Naive thymus-derived CD4-positive, alpha-beta T cell (primary cell): ENCODE measurements at regions of chr1 and their contacts with region 1.

Region 1: GRCh38 chr1:228165372-228166169 is at the start of gene IBA57:
- DNase-seq: peak; percentile 99 to 100 (median 100)
- ATAC-seq: peak; percentile 89
- H3K4me3 ChIP-seq: peak within 1 kb of the TSS; percentile 79
- H3K4me3 Mint-ChIP-seq: peak within 1 kb of the TSS; percentile 76 to 92 (median 88)
- H3K27ac ChIP-seq: peak within 1 kb of the TSS; percentile 97
- H3K27ac Mint-ChIP-seq: peak within 1 kb of the TSS; percentile 87 to 98 (median 98)
- H3K4me1 ChIP-seq: peaks cover 14 to 39% of the 10 kb centered on the region in 2 donors
- H3K4me1 Mint-ChIP-seq: peaks cover 10 to 65% (median 48%) of the 10 kb centered on the region in 7 donors
- H3K27me3 ChIP-seq: no peaks in the 10 kb centered on the region
- H3K27me3 Mint-ChIP-seq: no peaks in the 10 kb centered on the region
- total RNA-seq, gene IBA57: 9.3 to 17.1 (median 10.9) TPM

Region 2: GRCh38 chr1:227999056-227999930 is 166.3 kb before region 1 on chr1:
- CTCF ChIA-PET with region 1: no interaction called
- POLR2A ChIA-PET with region 1: no interaction called
- intact Hi-C with region 1: loop called in 1 of 2 experiments (anchors 1 kb)
- DNase-seq: peak; percentile 42 to 74 (median 60)
- ATAC-seq: peak; percentile 93
- H3K4me3 ChIP-seq: no peak overlapping the region
- H3K4me3 Mint-ChIP-seq: no peak overlapping the region
- H3K27ac ChIP-seq: no peak overlapping the region
- H3K27ac Mint-ChIP-seq: no peak overlapping the region
- H3K4me1 ChIP-seq: no peaks in the 10 kb centered on the region
- H3K4me1 Mint-ChIP-seq: no peaks in the 10 kb centered on the region
- H3K27me3 ChIP-seq: peaks cover under 1 to 5% of the 10 kb centered on the region in 2 donors
- H3K27me3 Mint-ChIP-seq: peaks cover 9 to 44% (median 25%) of the 10 kb centered on the region in 5 donors

Region 3: DNA sequence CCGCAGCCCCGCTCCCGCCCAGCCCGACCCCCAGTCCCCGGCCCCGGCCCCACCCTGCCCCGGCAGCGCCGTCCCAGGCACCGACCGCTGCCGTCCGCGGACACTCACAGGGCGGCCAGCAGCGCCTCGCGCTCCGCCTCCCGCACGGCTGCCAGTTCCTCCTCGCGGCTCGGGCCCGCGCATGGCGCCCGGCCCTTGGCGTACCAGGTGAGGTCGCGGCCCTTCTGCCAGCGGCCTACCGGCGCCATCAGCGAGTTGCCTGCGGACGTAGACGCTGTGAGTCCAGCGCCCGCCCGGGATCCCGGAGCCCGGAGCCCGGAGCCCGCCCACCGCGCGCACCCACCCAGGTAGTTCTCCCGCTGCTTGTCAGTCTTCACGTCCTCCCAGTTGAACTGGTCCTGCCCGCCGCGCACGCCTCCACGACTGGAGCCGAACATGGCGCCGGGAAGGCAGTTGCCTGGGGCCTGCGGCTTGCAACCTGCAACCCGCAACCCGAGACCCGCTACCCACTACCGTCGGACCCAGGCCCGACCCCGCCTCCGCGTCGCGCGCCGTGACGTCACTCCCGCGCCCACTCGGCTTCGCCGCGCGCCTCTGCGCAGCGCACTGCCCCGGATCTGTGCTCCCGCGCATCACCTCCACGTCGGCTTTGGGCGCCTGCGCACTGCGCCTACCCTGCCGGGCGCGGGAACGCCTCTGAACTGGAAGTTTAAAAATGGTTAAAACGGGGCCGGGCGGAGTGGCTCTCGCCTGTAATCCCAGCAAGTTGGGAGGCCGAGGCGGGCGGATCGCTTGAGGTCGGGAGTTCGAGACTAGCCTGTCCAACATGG is 62.6 kb before region 1 on chr1 and contains the start of gene C1orf35:
- CTCF ChIA-PET with region 1: interaction called, 3 read pairs
- POLR2A ChIA-PET with region 1: interaction called, 10 read pairs
- intact Hi-C with region 1: loop called (anchors 1 kb)
- DNase-seq: peak; percentile 90 to 97 (median 93)
- ATAC-seq: peak; percentile 85
- H3K4me3 ChIP-seq: peak within 1 kb of the TSS; percentile 95
- H3K4me3 Mint-ChIP-seq: peak within 1 kb of the TSS; percentile 91 to 97 (median 93)
- H3K27ac ChIP-seq: peak within 1 kb of the TSS; percentile 94
- H3K27ac Mint-ChIP-seq: peak within 1 kb of the TSS; percentile 90 to 95 (median 94)
- H3K4me1 ChIP-seq: peaks cover 17 to 20% of the 10 kb centered on the region in 2 donors
- H3K4me1 Mint-ChIP-seq: peaks cover 6 to 43% (median 23%) of the 10 kb centered on the region in 7 donors
- H3K27me3 ChIP-seq: no peaks in the 10 kb centered on the region
- H3K27me3 Mint-ChIP-seq: no peaks in the 10 kb centered on the region
- total RNA-seq, gene C1orf35: 16.8 to 31.8 (median 27.8) TPM

Region 4: DNA sequence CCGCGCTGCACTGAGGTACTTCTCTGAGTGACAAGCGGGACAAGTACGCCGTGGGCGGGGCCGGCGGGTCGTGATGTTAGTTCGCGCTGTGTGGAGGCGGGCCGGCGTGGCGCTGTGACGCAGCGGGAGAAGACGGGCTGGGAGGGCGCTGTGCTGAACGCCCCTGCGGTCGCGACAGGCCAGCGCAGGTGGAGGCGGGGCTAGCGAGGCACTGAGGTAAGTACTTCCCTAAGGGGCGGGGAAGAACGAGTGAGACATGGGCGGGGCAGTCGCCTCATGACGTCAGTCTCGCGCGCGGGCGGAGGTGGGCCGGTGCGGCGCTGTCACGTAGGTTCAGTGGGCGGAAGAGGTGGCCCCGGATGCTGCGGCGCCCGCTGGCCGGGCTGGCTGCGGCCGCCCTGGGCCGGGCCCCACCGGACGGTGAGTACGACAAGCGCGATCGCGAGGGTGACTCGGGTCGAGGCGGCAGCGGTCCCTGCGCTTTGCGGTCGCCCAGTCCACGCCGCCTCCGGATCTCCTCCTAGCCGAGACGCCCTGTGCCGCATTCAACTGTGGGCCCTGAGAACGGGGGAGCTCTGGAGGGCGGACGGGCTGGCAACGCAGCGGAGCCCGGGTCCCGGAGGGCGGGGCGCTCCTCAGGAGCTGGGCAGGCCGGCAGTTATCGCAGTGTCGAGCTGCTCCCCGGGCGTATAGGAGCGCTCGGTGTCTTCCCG is 25.5 kb before region 1 on chr1 and contains the start of gene GUK1:
- CTCF ChIA-PET with region 1: interaction called, 9 read pairs
- POLR2A ChIA-PET with region 1: interaction called, 109 read pairs
- intact Hi-C with region 1: loop called (anchors 1 kb)
- DNase-seq: peak; percentile 98 to 100 (median 100)
- ATAC-seq: peak; percentile 93
- H3K4me3 ChIP-seq: peak within 1 kb of the TSS; percentile 88
- H3K4me3 Mint-ChIP-seq: peak within 1 kb of the TSS; percentile 87 to 99 (median 95)
- H3K27ac ChIP-seq: peak within 1 kb of the TSS; percentile 99
- H3K27ac Mint-ChIP-seq: peak within 1 kb of the TSS; percentile 83 to 100 (median 99)
- H3K4me1 ChIP-seq: peaks cover 42 to 49% of the 10 kb centered on the region in 2 donors
- H3K4me1 Mint-ChIP-seq: peaks cover 23 to 48% (median 34%) of the 10 kb centered on the region in 7 donors
- H3K27me3 ChIP-seq: no peaks in the 10 kb centered on the region
- H3K27me3 Mint-ChIP-seq: peaks cover 0 to 24% (median 0%) of the 10 kb centered on the region in 5 donors
- total RNA-seq, gene GUK1: 145 to 309 (median 279) TPM

Region 5: DNA sequence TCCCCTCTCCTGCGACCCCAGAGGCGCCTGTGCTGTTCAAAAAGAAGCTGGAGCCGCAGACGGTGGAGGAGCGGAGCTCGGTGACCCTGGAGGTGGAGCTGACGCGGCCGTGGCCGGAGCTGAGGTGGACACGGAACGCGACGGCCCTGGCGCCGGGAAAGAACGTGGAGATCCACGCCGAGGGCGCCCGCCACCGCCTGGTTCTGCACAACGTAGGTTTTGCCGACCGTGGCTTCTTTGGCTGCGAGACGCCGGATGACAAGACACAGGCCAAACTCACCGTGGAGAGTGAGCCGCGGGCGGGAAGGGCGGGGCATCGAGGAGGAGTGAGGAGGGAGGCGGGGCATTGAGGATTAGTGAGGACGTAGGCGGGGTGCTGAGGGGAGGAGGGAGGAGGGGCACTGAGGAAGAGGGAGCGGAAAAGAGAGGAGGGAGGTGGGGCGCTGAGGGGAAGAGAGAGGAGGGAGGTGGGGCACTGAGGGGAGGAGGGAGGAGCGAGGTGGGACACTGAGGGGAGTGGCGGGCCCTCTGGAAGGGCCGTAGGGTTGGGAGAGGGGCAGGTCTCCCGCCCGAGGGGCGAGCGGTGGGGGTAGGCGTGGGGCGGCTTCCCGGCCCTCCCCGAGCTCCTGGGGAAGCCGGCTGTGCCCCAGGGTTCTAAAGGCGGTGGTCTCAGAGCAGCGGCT is 110.3 kb after region 1 on chr1:
- CTCF ChIA-PET with region 1: no interaction called
- POLR2A ChIA-PET with region 1: interaction called, 9 read pairs
- intact Hi-C with region 1: loop called (anchors 1 kb)
- DNase-seq: peak; percentile 53 to 88 (median 82)
- ATAC-seq: peak; percentile 96
- H3K4me3 ChIP-seq: peak overlapping the region; percentile 77
- H3K4me3 Mint-ChIP-seq: peak overlapping the region; percentile 71 to 88 (median 82)
- H3K27ac ChIP-seq: peak overlapping the region; percentile 77
- H3K27ac Mint-ChIP-seq: peak overlapping the region in 7 of 9 donors; percentile 21 to 73 (median 60)
- H3K4me1 ChIP-seq: no peaks in the 10 kb centered on the region
- H3K4me1 Mint-ChIP-seq: peaks cover 8 to 20% (median 19%) of the 10 kb centered on the region in 7 donors
- H3K27me3 ChIP-seq: no peaks in the 10 kb centered on the region
- H3K27me3 Mint-ChIP-seq: no peaks in the 10 kb centered on the region

Region 6: GRCh38 chr1:228486596-228487335 is 321.2 kb after region 1 on chr1:
- CTCF ChIA-PET with region 1: no interaction called
- POLR2A ChIA-PET with region 1: interaction called, 10 read pairs
- intact Hi-C with region 1: loop called (anchors 1 kb)
- DNase-seq: peak; percentile 76 to 91 (median 86)
- ATAC-seq: peak; percentile 85
- H3K4me3 ChIP-seq: peak overlapping the region; percentile 98
- H3K4me3 Mint-ChIP-seq: peak overlapping the region; percentile 92 to 99 (median 98)
- H3K27ac ChIP-seq: peak overlapping the region; percentile 99
- H3K27ac Mint-ChIP-seq: peak overlapping the region; percentile 99 to 100 (median 100)
- H3K4me1 ChIP-seq: peaks cover 15 to 19% of the 10 kb centered on the region in 2 donors
- H3K4me1 Mint-ChIP-seq: peaks cover 14 to 49% (median 36%) of the 10 kb centered on the region in 7 donors
- H3K27me3 ChIP-seq: no peaks in the 10 kb centered on the region
- H3K27me3 Mint-ChIP-seq: no peaks in the 10 kb centered on the region